ENCODE measurements at regions of chr11 and their contacts with region 1.

Region 1: DNA sequence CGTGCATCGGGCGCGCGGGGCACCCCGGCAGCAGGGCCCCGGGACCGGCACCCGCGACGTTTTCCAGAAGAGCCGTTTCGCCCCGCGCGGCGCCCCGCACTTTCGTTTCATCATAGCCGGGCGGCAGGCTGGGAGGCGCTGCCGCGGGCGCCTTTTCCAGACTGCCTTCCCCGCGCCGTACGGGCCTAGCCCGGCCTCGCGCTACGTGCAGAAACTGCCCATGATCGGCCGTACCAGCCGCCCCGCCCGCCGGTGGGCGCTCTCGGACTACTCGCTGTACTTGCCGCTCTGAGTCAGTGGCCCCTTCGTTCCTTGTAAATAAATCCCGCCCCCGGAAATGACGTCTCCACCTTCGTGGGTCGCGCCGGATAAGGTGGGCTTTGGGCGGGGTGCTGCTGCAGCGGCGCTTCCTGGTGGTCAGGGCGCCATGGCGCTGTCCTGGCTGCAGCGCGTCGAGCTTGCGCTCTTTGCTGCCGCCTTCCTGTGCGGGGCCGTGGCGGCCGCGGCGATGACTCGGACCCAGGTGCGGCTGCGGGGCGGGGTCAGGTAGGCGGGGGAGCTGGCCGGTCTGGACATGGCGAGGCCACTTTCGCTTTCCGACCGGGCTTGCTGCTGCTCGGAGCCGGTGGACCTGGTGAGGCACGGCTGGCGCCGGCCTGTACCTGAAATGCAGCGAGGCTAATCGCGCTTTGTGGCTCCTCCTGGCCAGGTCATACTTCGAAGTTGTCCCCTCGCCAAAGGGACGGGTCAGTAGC is at the start of gene TMEM179B:
- DNase-seq: peak; percentile 98
- H3K4me3 Mint-ChIP-seq: peak within 1 kb of the TSS; percentile 95
- H3K27ac Mint-ChIP-seq: peak within 1 kb of the TSS; percentile 93
- H3K4me1 Mint-ChIP-seq: peaks cover 39% of the 10 kb centered on the region
- H3K27me3 Mint-ChIP-seq: no peaks in the 10 kb centered on the region
- total RNA-seq, gene TMEM179B: 25.0 to 25.5 TPM

Region 2: DNA sequence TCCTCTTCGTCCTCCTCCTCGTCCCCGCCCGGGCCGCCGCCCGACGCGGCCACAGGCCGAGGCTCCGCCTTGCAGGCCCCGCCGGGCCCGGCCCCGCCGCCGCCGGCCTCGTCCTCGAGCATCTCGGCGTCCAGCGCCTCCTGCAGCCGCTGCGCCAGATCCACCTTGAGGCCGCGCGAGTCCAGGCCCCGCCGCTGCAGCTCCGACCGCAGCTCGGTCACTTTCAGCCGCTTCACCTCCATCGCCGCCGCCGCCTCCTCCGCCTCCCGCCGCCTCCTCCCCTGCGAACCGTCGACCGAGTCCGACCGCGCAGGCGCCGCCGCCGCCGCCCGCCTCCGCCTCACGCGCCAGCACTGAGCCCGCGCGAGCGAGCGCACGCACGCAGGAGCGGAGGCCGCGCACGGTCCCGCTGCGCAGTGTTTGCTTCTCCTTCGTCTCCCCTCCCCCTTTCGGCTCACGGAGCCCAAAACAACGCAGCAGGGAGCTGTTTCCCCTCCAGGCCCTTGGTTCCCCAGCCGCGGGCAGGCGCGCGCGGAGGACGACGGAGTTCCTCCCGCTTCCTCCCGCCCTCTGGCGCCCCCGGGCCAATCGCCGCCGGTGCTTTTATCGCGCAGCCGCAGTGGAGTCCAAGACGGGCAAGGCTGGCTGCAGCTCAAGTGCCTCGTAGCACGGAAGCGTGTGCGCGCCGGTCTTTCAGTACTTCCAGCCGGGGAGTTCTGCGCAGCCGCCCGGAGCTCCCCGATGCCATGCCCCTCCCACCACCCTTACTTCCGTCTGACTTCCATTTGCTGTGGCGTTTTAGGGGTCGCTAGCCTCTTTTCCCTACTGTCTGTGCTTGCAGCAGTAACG is 60.0 kb before region 1 on chr11 and contains the start of gene HNRNPUL2:
- CTCF ChIA-PET with region 1: interaction called, 28 read pairs
- POLR2A ChIA-PET with region 1: interaction called, 15 read pairs
- intact Hi-C with region 1: loop called (anchors 1 kb)
- DNase-seq: peak; percentile 99
- H3K4me3 Mint-ChIP-seq: peak within 1 kb of the TSS; percentile 99
- H3K27ac Mint-ChIP-seq: peak within 1 kb of the TSS; percentile 93
- H3K4me1 Mint-ChIP-seq: peaks cover 44% of the 10 kb centered on the region
- H3K27me3 Mint-ChIP-seq: no peaks in the 10 kb centered on the region
- total RNA-seq, gene HNRNPUL2: 56.0 to 62.3 TPM

Region 3: GRCh38 chr11:62771144-62772021 is 15.8 kb before region 1 on chr11 and contains the start of gene TAF6L:
- CTCF ChIA-PET with region 1: interaction called, 89 read pairs
- POLR2A ChIA-PET with region 1: interaction called, 17 read pairs
- intact Hi-C with region 1: loop called (anchors 1 kb)
- DNase-seq: peak; percentile 98
- H3K4me3 Mint-ChIP-seq: peak within 1 kb of the TSS; percentile 79
- H3K27ac Mint-ChIP-seq: peak within 1 kb of the TSS; percentile 94
- H3K4me1 Mint-ChIP-seq: peaks cover 24% of the 10 kb centered on the region
- H3K27me3 Mint-ChIP-seq: no peaks in the 10 kb centered on the region
- total RNA-seq, gene TAF6L: 11.9 to 12.0 TPM

Region 4: GRCh38 chr11:62805076-62805892 is 18.1 kb after region 1 on chr11 and contains the start of gene NXF1:
- CTCF ChIA-PET with region 1: interaction called, 16 read pairs
- POLR2A ChIA-PET with region 1: interaction called, 18 read pairs
- intact Hi-C with region 1: loop called (anchors 1 kb)
- DNase-seq: peak; percentile 96
- H3K4me3 Mint-ChIP-seq: peak within 1 kb of the TSS; percentile 99
- H3K27ac Mint-ChIP-seq: peak within 1 kb of the TSS; percentile 99
- H3K4me1 Mint-ChIP-seq: peaks cover 34% of the 10 kb centered on the region
- H3K27me3 Mint-ChIP-seq: no peaks in the 10 kb centered on the region
- total RNA-seq, gene NXF1: 70.8 to 83.6 TPM

Region 5: GRCh38 chr11:62860835-62861563 is 73.8 kb after region 1 on chr11:
- CTCF ChIA-PET with region 1: interaction called, 71 read pairs
- POLR2A ChIA-PET with region 1: interaction called, 38 read pairs
- intact Hi-C with region 1: loop called (anchors 1 kb)
- DNase-seq: peak; percentile 14
- H3K4me3 Mint-ChIP-seq: no peak overlapping the region
- H3K27ac Mint-ChIP-seq: no peak overlapping the region
- H3K4me1 Mint-ChIP-seq: peaks cover 43% of the 10 kb centered on the region
- H3K27me3 Mint-ChIP-seq: no peaks in the 10 kb centered on the region